AG04449 (cell line): ENCODE measurements at regions of chr11 and their contacts with region 1.

Region 1: DNA sequence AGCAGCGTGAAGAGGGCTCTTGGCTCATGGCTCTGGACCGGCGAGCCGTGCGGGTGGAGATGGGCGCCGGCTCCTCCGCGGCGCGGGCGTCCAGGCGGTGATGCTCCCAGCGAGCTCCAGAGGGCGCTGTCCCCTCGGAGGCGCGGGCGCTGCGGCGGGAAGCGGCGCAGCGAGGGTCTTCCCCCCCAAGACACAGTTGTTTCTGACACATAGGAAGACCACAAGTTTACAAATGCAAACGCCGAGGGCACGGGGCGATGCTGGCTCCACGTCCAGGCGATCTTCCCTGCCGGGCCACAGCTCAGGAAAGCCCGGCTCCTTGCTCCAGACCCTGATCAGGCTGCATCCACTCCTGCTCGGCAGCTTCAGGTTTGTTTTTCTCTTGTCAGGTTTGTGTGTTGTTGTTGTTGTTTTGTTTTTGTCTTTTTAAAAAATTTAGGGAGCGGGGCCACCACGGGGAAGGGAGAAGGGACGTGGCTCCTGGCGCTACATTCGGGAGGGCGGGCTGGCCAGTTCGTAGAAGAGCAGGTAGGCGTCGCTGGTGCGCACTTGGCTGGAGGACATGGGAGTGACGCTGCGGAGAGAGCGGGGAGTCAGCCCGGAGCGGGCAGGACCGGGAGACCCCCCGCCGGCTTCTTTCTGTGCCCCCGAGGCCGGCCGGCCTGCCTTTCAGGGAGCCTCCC is 10.0 kb upstream of the MFRP start:
- DNase-seq: no peak
- H3K4me3 ChIP-seq: peak overlapping the region; percentile 69
- CTCF ChIP-seq: peak; percentile 98

Region 2: GRCh38 chr11:119339589-119340343 is 16.7 kb before region 1 on chr11:
- CTCF ChIA-PET with region 1: interaction called, 158 read pairs
- POLR2A ChIA-PET with region 1: interaction called, 11 read pairs
- DNase-seq: no peak
- H3K4me3 ChIP-seq: peak overlapping the region; percentile 59
- CTCF ChIP-seq: peak; percentile 91

Region 3: DNA sequence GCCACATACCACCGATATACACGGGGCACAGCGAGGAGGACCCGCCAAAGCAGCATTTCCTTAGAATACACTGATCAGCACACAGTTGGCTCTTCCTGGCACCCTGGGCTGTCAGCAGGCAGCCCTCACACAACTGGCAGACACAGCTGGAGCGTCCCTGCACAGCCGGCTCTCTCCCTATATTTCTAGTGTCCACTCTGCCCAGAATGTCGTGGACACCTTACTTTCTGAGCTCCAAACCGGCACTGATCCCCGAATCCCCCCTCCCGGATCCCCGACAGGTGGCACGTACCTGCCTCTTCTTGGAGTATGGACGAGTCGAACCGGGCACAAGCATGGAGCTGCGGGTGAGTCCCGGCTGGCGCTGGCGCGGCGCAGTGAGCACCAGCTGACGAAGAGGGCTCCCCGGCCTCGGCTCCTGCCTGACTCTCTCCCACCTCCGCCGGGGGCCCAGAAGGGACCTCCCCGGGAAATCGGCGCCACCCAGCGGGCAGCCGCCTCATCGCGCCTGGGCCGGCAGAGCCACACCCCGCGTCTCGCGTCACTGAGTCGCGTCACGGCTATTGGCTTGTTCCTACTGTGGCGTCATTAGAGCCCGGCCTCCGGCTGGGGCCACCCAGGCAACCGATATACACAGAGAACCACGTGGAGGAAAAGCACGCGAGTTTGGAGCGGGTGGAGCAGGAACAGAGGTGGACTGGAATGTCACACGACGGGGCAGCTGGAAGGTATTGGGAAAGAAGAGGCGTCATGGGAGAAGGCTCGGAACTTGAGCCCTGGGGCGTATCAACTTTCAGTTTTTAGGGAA is 24.9 kb after region 1 on chr11 and contains the start of gene USP2:
- CTCF ChIA-PET with region 1: interaction called, 134 read pairs
- POLR2A ChIA-PET with region 1: no interaction called
- DNase-seq: peak; percentile 63
- H3K4me3 ChIP-seq: peak within 1 kb of the TSS; percentile 64
- CTCF ChIP-seq: peak; percentile 96

Region 4: GRCh38 chr11:119421941-119422808 is 65.7 kb after region 1 on chr11:
- CTCF ChIA-PET with region 1: interaction called, 17 read pairs
- POLR2A ChIA-PET with region 1: no interaction called
- DNase-seq: no peak
- H3K4me3 ChIP-seq: peak overlapping the region; percentile 91
- CTCF ChIP-seq: no peak

Region 5: GRCh38 chr11:119460582-119460981 is 104.1 kb after region 1 on chr11:
- CTCF ChIA-PET with region 1: interaction called, 33 read pairs
- POLR2A ChIA-PET with region 1: no interaction called
- DNase-seq: peak; percentile 88
- H3K4me3 ChIP-seq: no peak overlapping the region
- CTCF ChIP-seq: no peak

Region 6: DNA sequence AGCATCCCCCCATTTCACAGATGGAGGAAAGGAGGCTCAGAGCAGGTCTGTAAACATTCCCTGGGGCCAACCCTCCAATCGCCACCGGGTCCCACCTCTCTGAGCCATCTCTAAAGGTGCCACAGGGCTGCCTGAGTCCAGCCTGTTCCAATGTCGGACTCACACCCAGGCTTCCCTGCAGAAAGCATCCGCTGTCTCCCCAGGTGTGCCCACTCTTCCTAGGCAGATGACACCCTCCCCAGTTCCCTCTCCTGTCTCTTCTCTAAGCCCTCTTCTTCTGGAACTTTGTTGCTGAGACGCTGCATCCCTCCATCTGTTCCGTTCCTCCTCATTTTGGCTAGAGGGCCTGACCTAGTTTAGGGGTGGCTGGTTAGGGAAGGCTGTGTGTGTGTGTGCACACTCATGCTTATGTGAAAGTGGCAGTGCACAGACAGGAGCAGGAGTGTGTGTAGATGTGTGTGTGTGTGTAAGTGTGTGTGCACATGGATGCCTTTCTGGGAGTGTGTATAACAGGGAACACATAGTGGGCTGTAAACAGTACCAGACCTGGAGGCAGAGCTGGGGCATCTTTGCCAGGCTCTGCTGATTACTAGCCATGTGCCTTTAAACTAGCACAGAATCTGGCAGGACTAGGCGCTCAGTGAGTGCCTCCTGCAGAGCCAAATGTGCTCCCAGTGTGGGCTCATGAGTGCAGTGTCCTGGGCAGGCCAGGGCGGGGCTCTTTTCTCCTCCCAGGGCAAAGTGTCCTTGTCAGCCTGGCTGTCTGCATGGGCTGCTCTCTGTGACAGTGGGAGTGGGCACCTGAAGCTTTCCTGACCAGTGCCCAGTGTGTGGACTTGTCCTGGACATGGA is 449.8 kb after region 1 on chr11:
- CTCF ChIA-PET with region 1: no interaction called
- POLR2A ChIA-PET with region 1: no interaction called
- DNase-seq: no peak
- H3K4me3 ChIP-seq: no peak overlapping the region
- CTCF ChIP-seq: no peak